ENCODE measurements at regions of chr1 and their contacts with region 1.

Region 1: DNA sequence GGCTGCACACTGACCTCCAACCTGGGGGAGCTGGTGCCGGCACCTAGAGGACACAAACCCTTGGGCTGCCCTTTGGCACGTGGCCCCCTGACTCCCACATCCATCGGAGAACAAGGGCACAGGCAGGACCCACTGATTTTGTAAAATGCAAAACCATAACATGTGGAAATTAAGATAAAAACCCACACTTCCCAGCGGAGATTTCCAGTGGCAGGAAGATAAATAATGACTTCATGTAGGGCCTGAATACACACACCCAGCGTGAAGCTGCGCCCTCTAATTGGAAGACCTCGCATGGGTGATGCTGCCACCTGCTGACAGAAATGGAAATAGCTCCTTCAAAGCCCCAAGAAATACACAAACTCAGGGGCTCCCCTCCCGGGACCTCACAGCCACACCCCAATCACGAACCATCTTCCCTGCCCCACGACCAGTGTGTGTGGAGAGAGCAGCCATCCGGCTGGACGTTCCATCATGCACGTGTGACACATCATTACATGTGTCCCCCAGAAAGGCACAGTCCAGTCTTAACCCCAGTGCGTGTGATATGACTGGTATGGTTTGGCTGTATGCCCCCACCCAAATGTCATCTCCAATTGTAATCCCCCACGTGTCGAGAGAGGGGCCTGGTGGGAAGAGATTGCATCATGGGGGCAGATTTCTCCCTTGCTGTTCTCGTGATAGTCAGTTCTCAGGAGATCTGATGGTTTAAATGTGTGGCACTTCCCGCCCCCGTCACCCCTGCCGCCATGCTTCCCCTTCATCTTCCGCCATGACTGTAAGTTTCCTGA is 5.7 kb upstream of the TPRG1L start:
- DNase-seq: peak; percentile 84
- H3K4me3 ChIP-seq: peak overlapping the region in 1 of 2 experiments; percentile 45; a peak in 1 of 4 replicates
- H3K27ac ChIP-seq: no peak overlapping the region
- H3K4me1 ChIP-seq: peaks cover 0 to 19% of the 10 kb centered on the region in 2 experiments; a peak in 1 of 4 replicates
- H3K27me3 ChIP-seq: no peaks in the 10 kb centered on the region
- CTCF ChIP-seq: peak; percentile 78
- EP300 ChIP-seq: no peak
- RAD21 ChIP-seq: peak; percentile 84

Region 2: DNA sequence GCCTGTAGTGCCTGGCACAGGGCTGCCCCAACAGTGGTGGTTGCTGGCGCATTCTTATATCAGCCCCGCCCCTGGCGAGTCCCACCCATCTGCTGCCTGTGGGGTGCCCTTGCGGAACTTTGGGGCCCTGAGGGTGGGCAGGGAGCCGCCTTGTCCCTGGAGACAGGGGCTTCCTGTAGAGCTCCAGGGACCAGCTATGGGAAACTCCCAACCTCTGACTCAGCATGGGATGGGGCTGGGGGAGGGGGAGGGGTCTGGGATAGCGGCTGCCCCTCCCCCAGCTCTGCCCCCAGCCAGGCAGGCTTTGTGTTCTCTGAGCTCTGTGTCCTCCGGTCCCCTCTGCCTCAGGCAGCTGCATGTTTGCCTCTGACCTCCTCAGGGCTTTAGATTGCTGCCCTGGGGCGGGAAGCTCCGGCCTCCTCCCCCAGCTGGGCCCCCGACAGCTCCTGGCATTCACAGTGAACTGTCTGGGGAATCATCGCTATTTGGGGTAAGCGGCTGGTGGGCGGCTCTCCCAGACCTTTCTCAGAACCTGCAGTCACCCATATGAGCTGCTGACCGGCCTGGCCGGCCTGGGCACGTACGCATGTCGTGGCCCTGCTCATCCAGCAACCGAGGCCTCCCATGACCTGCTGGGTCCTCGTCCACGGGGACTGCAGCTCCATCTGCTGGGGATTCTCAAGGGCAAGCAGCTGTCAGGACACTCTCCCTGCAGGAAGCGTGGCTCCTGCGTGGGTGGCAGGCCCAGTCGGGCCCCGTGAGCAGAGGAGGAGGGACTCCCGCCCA is 147.6 kb before region 1 on chr1:
- CTCF ChIA-PET with region 1: interaction called, 11 read pairs
- POLR2A ChIA-PET with region 1: no interaction called
- DNase-seq: peak; percentile 73
- H3K4me3 ChIP-seq: no peak overlapping the region
- H3K27ac ChIP-seq: no peak overlapping the region
- H3K4me1 ChIP-seq: peaks cover 0 to 7% of the 10 kb centered on the region in 2 experiments; a peak in 2 of 4 replicates
- H3K27me3 ChIP-seq: no peaks in the 10 kb centered on the region
- CTCF ChIP-seq: peak; percentile 28
- EP300 ChIP-seq: no peak
- RAD21 ChIP-seq: peak; percentile 45

Region 3: GRCh38 chr1:3501856-3502665 is 117.0 kb before region 1 on chr1:
- CTCF ChIA-PET with region 1: interaction called, 26 read pairs
- POLR2A ChIA-PET with region 1: no interaction called
- DNase-seq: peak; percentile 75
- H3K4me3 ChIP-seq: no peak overlapping the region
- H3K27ac ChIP-seq: peak overlapping the region in 1 of 2 experiments; percentile 68; a peak in 1 of 4 replicates
- H3K4me1 ChIP-seq: peaks cover 5 to 35% of the 10 kb centered on the region in 2 experiments; a peak in 2 of 4 replicates
- H3K27me3 ChIP-seq: no peaks in the 10 kb centered on the region
- CTCF ChIP-seq: no peak
- EP300 ChIP-seq: no peak
- RAD21 ChIP-seq: no peak

Region 4: DNA sequence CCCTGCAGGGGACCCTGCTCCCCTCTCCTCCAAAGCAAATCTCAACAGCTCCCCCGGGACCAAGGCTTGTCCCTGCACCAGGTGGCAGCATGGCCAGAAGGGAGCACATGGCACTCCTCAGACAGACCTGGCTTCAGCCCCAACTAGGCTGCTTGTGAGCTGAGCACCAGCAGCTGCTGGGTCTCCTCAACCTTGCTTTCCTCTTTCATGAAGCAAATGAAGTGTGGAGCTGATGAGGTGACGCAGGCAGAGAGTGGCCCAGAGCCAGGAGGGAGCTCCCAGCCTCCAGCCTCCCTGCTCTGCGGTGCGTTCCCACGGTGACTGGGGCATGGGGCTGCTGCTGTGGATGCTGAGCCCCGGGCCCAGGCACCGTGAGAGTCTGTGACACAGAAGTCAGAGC is 41.8 kb before region 1 on chr1:
- CTCF ChIA-PET with region 1: interaction called, 24 read pairs
- POLR2A ChIA-PET with region 1: no interaction called
- DNase-seq: peak; percentile 68
- H3K4me3 ChIP-seq: no peak overlapping the region
- H3K27ac ChIP-seq: peak overlapping the region in 1 of 2 experiments; percentile 82; a peak in 2 of 4 replicates
- H3K4me1 ChIP-seq: peaks cover 0 to 68% of the 10 kb centered on the region in 2 experiments; a peak in 1 of 4 replicates
- H3K27me3 ChIP-seq: no peaks in the 10 kb centered on the region
- CTCF ChIP-seq: no peak
- EP300 ChIP-seq: no peak
- RAD21 ChIP-seq: 0 out of 2 replicates have a peak, but pooled peaks have one; percentile 10

Region 5: GRCh38 chr1:3586932-3587678 is 32.0 kb before region 1 on chr1:
- CTCF ChIA-PET with region 1: interaction called, 23 read pairs
- POLR2A ChIA-PET with region 1: no interaction called
- DNase-seq: no peak
- H3K4me3 ChIP-seq: no peak overlapping the region
- H3K27ac ChIP-seq: no peak overlapping the region
- H3K4me1 ChIP-seq: peaks cover 0 to 13% of the 10 kb centered on the region in 2 experiments; a peak in 1 of 4 replicates
- H3K27me3 ChIP-seq: no peaks in the 10 kb centered on the region
- CTCF ChIP-seq: no peak
- EP300 ChIP-seq: no peak
- RAD21 ChIP-seq: no peak

Region 6: GRCh38 chr1:3598051-3598491 is 21.0 kb before region 1 on chr1:
- CTCF ChIA-PET with region 1: interaction called, 17 read pairs
- POLR2A ChIA-PET with region 1: no interaction called
- DNase-seq: no peak
- H3K4me3 ChIP-seq: no peak overlapping the region
- H3K27ac ChIP-seq: no peak overlapping the region; a peak in 1 of 4 replicates
- H3K4me1 ChIP-seq: peaks cover 0 to 23% of the 10 kb centered on the region in 2 experiments; a peak in 1 of 4 replicates
- H3K27me3 ChIP-seq: no peaks in the 10 kb centered on the region
- CTCF ChIP-seq: no peak
- EP300 ChIP-seq: no peak
- RAD21 ChIP-seq: no peak

Region 7: GRCh38 chr1:3631330-3632262 is 12.5 kb after region 1 on chr1:
- CTCF ChIA-PET with region 1: interaction called, 30 read pairs
- POLR2A ChIA-PET with region 1: no interaction called
- DNase-seq: no peak
- H3K4me3 ChIP-seq: no peak overlapping the region
- H3K27ac ChIP-seq: no peak overlapping the region; a peak in 1 of 4 replicates
- H3K4me1 ChIP-seq: peaks cover 0 to 19% of the 10 kb centered on the region in 2 experiments; a peak in 2 of 4 replicates
- H3K27me3 ChIP-seq: no peaks in the 10 kb centered on the region
- CTCF ChIP-seq: no peak
- EP300 ChIP-seq: no peak
- RAD21 ChIP-seq: no peak

Region 8: GRCh38 chr1:3689138-3689750 is 70.2 kb after region 1 on chr1:
- CTCF ChIA-PET with region 1: no interaction called
- POLR2A ChIA-PET with region 1: no interaction called
- DNase-seq: no peak
- H3K4me3 ChIP-seq: no peak overlapping the region
- H3K27ac ChIP-seq: no peak overlapping the region
- H3K4me1 ChIP-seq: peaks cover 0 to 2% of the 10 kb centered on the region in 2 experiments; a peak in 1 of 4 replicates
- H3K27me3 ChIP-seq: no peaks in the 10 kb centered on the region
- CTCF ChIP-seq: no peak
- EP300 ChIP-seq: no peak
- RAD21 ChIP-seq: no peak

Region 9: GRCh38 chr1:3785456-3786157 is 166.5 kb after region 1 on chr1:
- CTCF ChIA-PET with region 1: no interaction called
- POLR2A ChIA-PET with region 1: no interaction called
- DNase-seq: peak; percentile 58
- H3K4me3 ChIP-seq: no peak overlapping the region; a peak in 1 of 4 replicates
- H3K27ac ChIP-seq: no peak overlapping the region
- H3K4me1 ChIP-seq: no peaks in the 10 kb centered on the region
- H3K27me3 ChIP-seq: no peaks in the 10 kb centered on the region
- CTCF ChIP-seq: peak; percentile 37
- EP300 ChIP-seq: no peak
- RAD21 ChIP-seq: peak; percentile 29

Measured in SK-N-SH (cell line).